WTC11 (cell line): ENCODE measurements at regions of chr20 and their contacts with region 1.

Region 1: DNA sequence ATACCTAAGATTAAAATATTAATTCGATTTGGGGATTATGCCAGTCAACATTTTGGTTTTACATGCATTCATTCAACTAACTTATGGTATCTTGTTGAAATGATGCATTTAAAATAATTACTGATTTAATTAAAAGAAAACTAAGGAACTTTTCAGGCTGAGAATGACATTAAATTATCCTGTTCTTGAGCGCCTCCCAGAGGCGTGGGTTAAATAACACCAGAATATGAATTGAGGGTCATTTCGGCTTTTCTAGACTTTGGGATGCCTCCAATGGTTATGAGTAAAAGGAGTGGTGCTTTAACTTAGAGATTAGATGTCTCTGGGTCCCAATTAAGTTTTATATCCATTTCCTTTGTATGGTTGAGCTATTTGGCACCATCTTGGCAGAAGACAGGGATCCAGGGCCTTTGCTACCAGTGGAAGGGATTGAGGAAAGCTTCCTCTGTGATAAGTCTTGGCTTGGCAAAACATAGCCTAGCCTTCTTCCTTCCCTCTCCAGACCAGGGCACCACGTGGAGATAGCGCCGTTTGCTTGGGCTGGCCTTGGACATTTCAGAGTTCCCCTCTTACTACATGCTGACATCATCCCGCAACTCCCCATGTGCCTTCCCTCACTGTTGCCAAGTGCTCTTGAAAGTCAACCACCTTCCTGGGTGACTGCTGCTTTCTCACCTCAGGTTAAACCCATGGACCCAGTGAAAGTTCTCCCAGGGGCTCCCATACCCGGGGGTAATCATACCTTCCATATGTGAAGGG is 28.7 kb downstream of the GNAS start:
- DNase-seq: no peak
- ATAC-seq: no peak
- H3K4me3 Mint-ChIP-seq: no peak overlapping the region
- H3K27ac Mint-ChIP-seq: no peak overlapping the region
- H3K4me1 Mint-ChIP-seq: peaks cover 79% of the 10 kb centered on the region
- H3K27me3 Mint-ChIP-seq: no peaks in the 10 kb centered on the region
- CTCF ChIP-seq: no peak

Region 2: GRCh38 chr20:58870239-58871014 is 10.7 kb before region 1 on chr20:
- CTCF ChIA-PET with region 1: interaction called, 15 read pairs
- POLR2A ChIA-PET with region 1: no interaction called
- DNase-seq: peak; percentile 83
- ATAC-seq: peak; percentile 91
- H3K4me3 Mint-ChIP-seq: no peak overlapping the region
- H3K27ac Mint-ChIP-seq: no peak overlapping the region
- H3K4me1 Mint-ChIP-seq: peaks cover 32% of the 10 kb centered on the region
- H3K27me3 Mint-ChIP-seq: no peaks in the 10 kb centered on the region
- CTCF ChIP-seq: peak; percentile 76